Natural killer cell (primary cell): ENCODE measurements at regions of chr1 and their contacts with region 1.

Region 1: DNA sequence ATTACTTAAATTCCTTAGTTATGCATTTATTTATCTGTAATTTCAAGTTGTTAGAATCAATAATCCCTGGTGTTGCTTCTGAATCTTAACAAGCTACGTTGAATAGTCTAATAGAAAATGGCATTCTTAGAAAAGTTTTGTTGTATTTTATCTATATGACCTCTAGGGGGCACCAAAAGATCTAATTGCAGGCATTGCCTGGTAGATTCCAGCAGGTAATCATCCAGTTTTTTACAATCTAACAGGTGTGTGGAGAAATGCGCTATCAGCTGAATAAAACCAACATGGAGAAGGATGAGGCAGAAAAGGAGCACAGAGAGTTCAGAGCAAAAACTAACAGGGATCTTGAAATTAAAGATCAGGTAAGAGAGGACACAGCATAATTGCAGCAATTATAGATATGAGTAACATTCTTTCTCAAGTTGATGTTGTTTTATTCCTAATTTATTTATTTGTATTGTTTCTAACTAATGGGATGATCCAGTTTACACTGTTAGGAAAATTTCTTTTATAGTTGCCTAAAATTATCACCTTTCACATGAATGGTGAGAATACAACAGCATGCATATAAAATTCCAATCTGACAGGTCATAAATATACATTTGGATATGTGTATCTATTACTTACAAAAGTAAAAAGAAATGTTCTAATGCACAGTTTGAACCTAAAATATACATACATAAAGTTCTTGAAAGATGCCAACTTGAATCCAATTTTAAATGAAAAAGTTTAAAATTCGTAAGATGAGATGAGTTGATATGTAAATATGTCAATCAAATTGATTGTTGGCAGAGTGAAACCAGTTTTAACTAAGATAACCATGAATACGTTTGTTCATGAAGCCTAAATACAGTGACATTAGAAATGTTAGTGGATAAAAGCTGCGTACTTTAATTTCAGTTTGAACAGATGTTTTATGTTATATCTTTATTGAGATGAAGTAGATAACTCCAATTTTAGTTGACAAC is 88.4 kb downstream of the SDCCAG8 start:
- DNase-seq: peak in 1 of 2 donors; percentile 71
- ATAC-seq: peak in 2 of 3 donors; percentile 57 to 67
- H3K4me3 ChIP-seq: no peak overlapping the region
- H3K4me3 Mint-ChIP-seq: no peak overlapping the region
- H3K27ac ChIP-seq: no peak overlapping the region
- H3K27ac Mint-ChIP-seq: no peak overlapping the region
- H3K4me1 ChIP-seq: no peaks in the 10 kb centered on the region
- H3K4me1 Mint-ChIP-seq: peaks cover 0 to 5% of the 10 kb centered on the region in 2 donors
- H3K27me3 ChIP-seq: no peaks in the 10 kb centered on the region
- H3K27me3 Mint-ChIP-seq: no peaks in the 10 kb centered on the region
- CTCF ChIP-seq: peak; percentile 95

Region 2: DNA sequence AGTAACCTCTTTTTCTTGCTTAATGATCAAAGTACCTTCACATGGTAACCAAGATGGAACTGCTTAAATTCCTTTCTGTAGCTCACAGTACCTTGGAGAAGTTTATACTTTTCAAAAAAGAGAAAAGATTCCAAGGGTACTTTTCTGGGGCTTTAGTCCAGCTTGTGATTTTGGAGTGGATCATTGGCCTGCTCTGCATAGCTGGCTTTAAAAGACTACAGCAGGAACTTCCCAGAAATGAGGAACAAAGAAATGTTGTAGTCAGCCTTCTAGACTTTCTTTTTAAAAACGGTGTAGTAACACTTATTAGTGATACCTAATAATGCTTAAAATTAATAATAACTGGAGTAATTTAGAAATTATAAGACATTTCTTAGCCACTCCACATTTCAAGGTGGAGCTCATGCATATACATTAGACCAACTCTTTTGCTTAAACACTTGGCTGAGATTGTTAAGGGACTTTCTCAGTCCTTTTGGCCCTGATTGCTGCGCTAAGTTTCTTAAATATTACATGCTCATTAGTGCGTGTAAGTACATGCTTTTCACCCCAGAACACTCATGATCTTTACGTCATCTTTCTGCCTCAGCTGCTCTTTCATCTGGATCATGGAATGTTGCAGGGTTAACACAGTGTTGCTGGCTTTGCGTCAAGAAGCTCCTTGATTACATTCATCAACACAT is 31.2 kb before region 1 on chr1:
- intact Hi-C with region 1: no loop called
- DNase-seq: no peak
- ATAC-seq: no peak
- H3K4me3 ChIP-seq: no peak overlapping the region
- H3K4me3 Mint-ChIP-seq: no peak overlapping the region
- H3K27ac ChIP-seq: peak overlapping the region; percentile 8
- H3K27ac Mint-ChIP-seq: no peak overlapping the region
- H3K4me1 ChIP-seq: no peaks in the 10 kb centered on the region
- H3K4me1 Mint-ChIP-seq: no peaks in the 10 kb centered on the region
- H3K27me3 ChIP-seq: no peaks in the 10 kb centered on the region
- H3K27me3 Mint-ChIP-seq: no peaks in the 10 kb centered on the region
- CTCF ChIP-seq: no peak

Region 3: GRCh38 chr1:243748706-243749283 is 404.5 kb after region 1 on chr1:
- intact Hi-C with region 1: loop called (anchors 1 kb)
- DNase-seq: peak in 1 of 2 donors; percentile 79
- ATAC-seq: peak; percentile 94 to 100 (median 100)
- H3K4me3 ChIP-seq: no peak overlapping the region
- H3K4me3 Mint-ChIP-seq: no peak overlapping the region
- H3K27ac ChIP-seq: no peak overlapping the region
- H3K27ac Mint-ChIP-seq: peak overlapping the region in 1 of 2 donors; percentile 58
- H3K4me1 ChIP-seq: no peaks in the 10 kb centered on the region
- H3K4me1 Mint-ChIP-seq: peaks cover 13 to 23% of the 10 kb centered on the region in 2 donors
- H3K27me3 ChIP-seq: no peaks in the 10 kb centered on the region
- H3K27me3 Mint-ChIP-seq: no peaks in the 10 kb centered on the region
- CTCF ChIP-seq: peak; percentile 76

Region 4: DNA sequence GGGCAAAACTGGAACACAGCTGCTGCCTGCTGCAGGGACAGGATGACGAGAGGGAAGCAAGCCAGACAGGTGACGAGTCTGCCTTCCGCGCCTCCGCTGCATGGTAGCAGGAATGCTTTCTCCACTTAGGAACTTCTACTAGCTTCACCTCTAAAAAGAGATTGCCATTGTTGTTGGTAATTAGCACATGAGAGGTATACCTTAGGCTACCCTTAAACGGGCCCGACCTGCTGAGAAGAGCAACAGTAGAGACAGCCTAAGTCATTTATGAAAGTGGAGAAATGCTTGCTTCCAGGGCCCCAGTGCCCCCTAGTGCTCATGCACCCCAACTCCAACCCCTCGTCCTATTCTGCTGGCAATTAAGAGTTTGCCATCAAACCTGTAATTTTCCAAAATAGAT is 602.7 kb after region 1 on chr1:
- intact Hi-C with region 1: loop called (anchors 1 kb)
- DNase-seq: peak in 1 of 2 donors; percentile 66
- ATAC-seq: peak; percentile 52 to 68 (median 64)
- H3K4me3 ChIP-seq: no peak overlapping the region
- H3K4me3 Mint-ChIP-seq: no peak overlapping the region
- H3K27ac ChIP-seq: no peak overlapping the region
- H3K27ac Mint-ChIP-seq: no peak overlapping the region
- H3K4me1 ChIP-seq: no peaks in the 10 kb centered on the region
- H3K4me1 Mint-ChIP-seq: no peaks in the 10 kb centered on the region
- H3K27me3 ChIP-seq: no peaks in the 10 kb centered on the region
- H3K27me3 Mint-ChIP-seq: peaks cover 4 to 15% of the 10 kb centered on the region in 2 donors
- CTCF ChIP-seq: peak; percentile 60

Region 5: GRCh38 chr1:244272471-244273261 is 928.4 kb after region 1 on chr1:
- intact Hi-C with region 1: loop called (anchors 1 kb)
- DNase-seq: peak; percentile 61 to 90
- ATAC-seq: peak; percentile 94 to 100 (median 99)
- H3K4me3 ChIP-seq: no peak overlapping the region
- H3K4me3 Mint-ChIP-seq: no peak overlapping the region
- H3K27ac ChIP-seq: no peak overlapping the region
- H3K27ac Mint-ChIP-seq: peak overlapping the region in 1 of 2 donors; percentile 4
- H3K4me1 ChIP-seq: peaks cover 7% of the 10 kb centered on the region
- H3K4me1 Mint-ChIP-seq: peaks cover 6 to 30% of the 10 kb centered on the region in 2 donors
- H3K27me3 ChIP-seq: no peaks in the 10 kb centered on the region
- H3K27me3 Mint-ChIP-seq: peaks cover 0 to 4% of the 10 kb centered on the region in 2 donors
- CTCF ChIP-seq: peak; percentile 99

Region 6: DNA sequence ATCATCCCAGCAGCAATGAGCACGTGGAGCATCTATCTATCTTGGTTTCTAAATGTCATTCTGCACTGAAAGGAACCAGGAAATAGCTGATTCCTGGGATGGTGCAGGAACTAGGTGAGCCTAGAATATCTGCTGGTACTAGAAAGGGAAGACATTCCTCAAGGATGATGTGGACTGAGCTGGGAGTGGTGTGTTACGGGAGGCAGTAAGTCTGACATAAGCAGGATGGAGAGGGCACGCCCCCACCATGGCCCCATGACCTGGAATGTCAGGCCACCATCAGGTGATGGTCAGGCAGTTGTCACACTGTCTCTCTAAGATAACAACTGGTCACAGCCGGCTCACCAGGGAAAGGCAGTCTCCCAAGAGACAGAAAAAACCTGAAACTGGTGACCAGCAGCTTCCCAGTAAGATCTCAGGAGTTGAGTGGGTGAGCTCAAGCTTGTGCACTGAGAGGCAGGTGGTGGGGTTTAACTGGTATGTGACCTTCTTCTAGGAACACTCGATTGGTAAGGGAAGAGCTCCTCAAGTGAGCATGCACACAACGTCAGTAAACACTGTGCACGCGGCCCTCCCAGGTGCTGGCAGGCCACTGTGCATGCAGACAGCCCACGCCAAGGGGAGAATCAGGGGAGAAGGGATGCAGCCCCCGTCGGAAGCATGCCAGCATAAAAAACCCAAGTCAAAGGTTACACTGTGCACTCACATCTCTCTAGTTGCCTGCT is 958.8 kb after region 1 on chr1:
- intact Hi-C with region 1: loop called (anchors 1 kb)
- DNase-seq: no peak
- ATAC-seq: no peak
- H3K4me3 ChIP-seq: no peak overlapping the region
- H3K4me3 Mint-ChIP-seq: no peak overlapping the region
- H3K27ac ChIP-seq: no peak overlapping the region
- H3K27ac Mint-ChIP-seq: peak overlapping the region; percentile 2 to 23
- H3K4me1 ChIP-seq: peaks cover 15% of the 10 kb centered on the region
- H3K4me1 Mint-ChIP-seq: peaks cover 28 to 46% of the 10 kb centered on the region in 2 donors
- H3K27me3 ChIP-seq: no peaks in the 10 kb centered on the region
- H3K27me3 Mint-ChIP-seq: no peaks in the 10 kb centered on the region
- CTCF ChIP-seq: no peak